H1 (cell line): ENCODE measurements at regions of chr9 and their contacts with region 1.

Region 1: GRCh38 chr9:26975693-26976059 is 19.5 kb downstream of the IFT74 start:
- DNase-seq: no peak
- H3K4me3 ChIP-seq: peak overlapping the region; percentile 19 to 54 (median 38); a peak in 6 of 8 replicates
- H3K27ac ChIP-seq: peak overlapping the region; percentile 98
- H3K4me1 ChIP-seq: peaks cover 0 to 19% (median 9%) of the 10 kb centered on the region in 4 experiments; a peak in 5 of 7 replicates
- H3K27me3 ChIP-seq: no peaks in the 10 kb centered on the region
- CTCF ChIP-seq: peak; percentile 32 to 80 (median 65)
- EP300 ChIP-seq: no peak
- POLR2A ChIP-seq: peak; percentile 55 to 90
- RAD21 ChIP-seq: peak; percentile 86

Region 2: DNA sequence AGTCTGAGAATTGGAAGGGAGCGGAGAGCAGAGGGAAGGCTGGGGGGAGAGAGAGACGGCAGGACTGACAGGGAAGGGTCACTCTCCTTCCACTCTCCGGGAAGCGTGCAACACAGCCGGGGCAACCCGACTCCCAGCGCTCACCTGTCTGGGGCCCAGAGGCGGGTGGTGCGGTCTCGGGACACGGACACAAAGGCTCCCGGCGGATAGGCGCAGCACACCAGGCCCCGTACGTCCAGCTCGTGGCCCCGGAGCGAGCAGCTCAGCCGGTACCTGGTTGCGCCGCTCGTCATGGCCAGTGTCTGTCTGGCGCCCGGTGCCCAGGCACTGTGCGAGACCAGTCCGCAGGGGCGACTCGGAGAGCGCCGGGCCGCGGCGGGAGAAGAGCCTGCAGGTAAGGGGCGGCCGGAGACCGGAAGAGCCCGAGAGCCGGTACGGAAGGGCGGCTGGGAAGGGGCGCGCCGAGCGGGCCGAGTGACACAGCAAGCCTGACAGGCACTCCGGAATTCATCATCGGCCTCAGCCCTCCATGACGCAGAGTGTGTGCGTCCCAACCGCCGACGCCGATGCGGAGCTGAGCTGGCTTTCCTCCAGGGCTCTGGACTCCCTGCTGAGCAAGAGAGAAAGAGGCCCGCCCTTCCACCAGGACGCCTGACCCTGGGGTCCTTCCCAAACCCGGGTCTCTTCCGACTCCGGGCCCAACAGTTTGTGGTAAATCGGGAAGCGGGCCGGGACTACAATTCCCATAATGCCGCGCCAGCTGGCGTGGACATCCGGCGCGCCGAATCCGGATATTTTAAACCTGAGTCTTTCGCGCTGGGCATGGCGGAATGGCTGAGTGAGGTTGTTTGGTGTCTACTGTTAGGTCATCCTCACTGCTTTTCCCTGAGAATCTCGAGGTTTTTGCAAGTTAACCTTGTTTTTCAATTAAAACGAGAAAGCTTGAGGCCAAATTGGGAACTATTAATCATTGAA is 28.6 kb before region 1 on chr9 and contains the start of gene PLAA:
- CTCF ChIA-PET with region 1: interaction called, 4 read pairs
- POLR2A ChIA-PET with region 1: interaction called, 21 read pairs
- DNase-seq: peak; percentile 75 to 91
- H3K4me3 ChIP-seq: peak within 1 kb of the TSS; percentile 93 to 97 (median 96)
- H3K27ac ChIP-seq: peak within 1 kb of the TSS; percentile 96
- H3K4me1 ChIP-seq: peaks cover 0 to 1% (median 0%) of the 10 kb centered on the region in 4 experiments; a peak in 4 of 7 replicates
- H3K27me3 ChIP-seq: no peaks in the 10 kb centered on the region
- CTCF ChIP-seq: peak in 1 of 3 experiments; percentile 25; a peak in 2 of 4 replicates
- EP300 ChIP-seq: peak in 1 of 2 experiments; percentile 56; a peak in 2 of 3 replicates
- POLR2A ChIP-seq: peak; percentile 44 to 95
- RAD21 ChIP-seq: peak in 1 of 2 experiments; percentile 19; a peak in 1 of 4 replicates
- total RNA-seq, gene PLAA: 64.2 and 64.5 TPM in 2 replicates

Region 3: GRCh38 chr9:26955921-26956859 is 19.5 kb before region 1 on chr9 and contains the start of gene IFT74:
- CTCF ChIA-PET with region 1: interaction called, 8 read pairs
- POLR2A ChIA-PET with region 1: interaction called, 21 read pairs
- DNase-seq: peak; percentile 59 to 91
- H3K4me3 ChIP-seq: peak within 1 kb of the TSS; percentile 61 to 89 (median 76)
- H3K27ac ChIP-seq: peak within 1 kb of the TSS; percentile 73
- H3K4me1 ChIP-seq: peaks cover 0 to 6% (median 2%) of the 10 kb centered on the region in 4 experiments; a peak in 4 of 7 replicates
- H3K27me3 ChIP-seq: no peaks in the 10 kb centered on the region
- CTCF ChIP-seq: no peak
- EP300 ChIP-seq: no peak
- POLR2A ChIP-seq: peak in 1 of 2 experiments; percentile 92; a peak in 2 of 3 replicates
- RAD21 ChIP-seq: no peak
- total RNA-seq, gene IFT74: 17.2 and 17.8 TPM in 2 replicates

Region 4: GRCh38 chr9:27227192-27227591 is 251.5 kb after region 1 on chr9:
- CTCF ChIA-PET with region 1: no interaction called
- POLR2A ChIA-PET with region 1: no interaction called
- DNase-seq: no peak
- H3K4me3 ChIP-seq: no peak overlapping the region
- H3K27ac ChIP-seq: no peak overlapping the region
- H3K4me1 ChIP-seq: no peaks in the 10 kb centered on the region
- H3K27me3 ChIP-seq: no peaks in the 10 kb centered on the region
- CTCF ChIP-seq: no peak
- EP300 ChIP-seq: no peak
- POLR2A ChIP-seq: no peak
- RAD21 ChIP-seq: no peak